ENCODE measurements at regions of chr3 and their contacts with region 1.

Region 1: GRCh38 chr3:179027326-179027900 is 44.2 kb downstream of the ZMAT3 start:
- DNase-seq: no peak
- ATAC-seq: peak in 1 of 2 donors; percentile 44

Region 2: DNA sequence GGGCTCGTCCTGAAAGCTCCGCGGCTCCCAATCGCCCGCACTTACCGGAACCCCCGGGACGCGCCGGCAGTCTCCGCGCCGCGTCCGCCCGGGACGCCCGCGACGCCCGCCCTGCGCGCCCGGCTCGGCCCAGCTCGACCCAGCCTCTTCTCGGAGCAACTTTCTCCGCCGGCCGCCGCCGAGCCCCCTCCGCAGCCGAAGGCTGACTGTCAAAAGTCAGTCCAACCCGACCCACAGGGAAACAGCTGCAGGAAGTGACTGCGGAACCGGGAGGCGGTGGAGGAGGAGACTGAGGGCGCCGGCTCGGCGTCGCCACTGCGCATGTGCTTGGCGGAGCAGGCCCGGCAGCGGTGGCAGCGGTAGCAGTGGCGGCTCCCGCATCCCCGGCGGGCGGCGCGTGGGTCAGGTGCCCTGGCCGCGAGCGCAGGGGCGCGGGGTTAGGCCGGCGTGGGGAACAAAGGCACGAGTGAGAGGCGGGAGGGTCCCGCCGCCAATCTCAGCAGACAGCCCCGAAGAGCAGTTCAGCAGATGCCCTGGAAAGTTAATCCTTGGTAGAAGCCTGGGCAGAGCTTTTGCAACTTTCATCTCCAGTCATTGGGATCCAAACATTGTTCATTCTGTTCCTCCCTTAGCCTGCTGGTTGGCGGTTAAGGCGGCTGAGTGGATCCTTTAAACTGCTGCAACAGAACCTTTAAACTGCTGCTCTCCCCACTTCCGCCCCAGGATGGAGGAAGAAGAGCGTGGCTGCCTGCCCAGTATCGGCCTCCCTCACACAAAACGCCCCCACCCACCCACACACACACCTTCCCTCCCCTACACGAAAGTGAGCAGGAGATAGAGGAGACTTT is 44.4 kb after region 1 on chr3 and contains the start of gene ZMAT3:
- intact Hi-C with region 1: loop called in 1 of 2 experiments (anchors 10 kb)
- DNase-seq: peak; percentile 93
- ATAC-seq: peak; percentile 97 to 99
- total RNA-seq, gene ZMAT3: 13.9 to 17.1 TPM

Region 3: GRCh38 chr3:179653096-179653797 is 625.8 kb after region 1 on chr3:
- intact Hi-C with region 1: no loop called
- DNase-seq: peak; percentile 83
- ATAC-seq: peak; percentile 83 to 90

Measured in left cardiac atrium (tissue), 4 donors.